ENCODE measurements at regions of chr18 and their contacts with region 1.

Region 1: GRCh38 chr18:10851824-10852319 is 297.5 kb downstream of the PIEZO2 start:
- DNase-seq: peak; percentile 75
- ATAC-seq: peak; percentile 63
- H3K4me3 ChIP-seq: no peak overlapping the region
- H3K27ac ChIP-seq: no peak overlapping the region
- H3K4me1 ChIP-seq: no peaks in the 10 kb centered on the region
- H3K27me3 ChIP-seq: peaks cover 77% of the 10 kb centered on the region
- CTCF ChIP-seq: peak; percentile 83

Region 2: DNA sequence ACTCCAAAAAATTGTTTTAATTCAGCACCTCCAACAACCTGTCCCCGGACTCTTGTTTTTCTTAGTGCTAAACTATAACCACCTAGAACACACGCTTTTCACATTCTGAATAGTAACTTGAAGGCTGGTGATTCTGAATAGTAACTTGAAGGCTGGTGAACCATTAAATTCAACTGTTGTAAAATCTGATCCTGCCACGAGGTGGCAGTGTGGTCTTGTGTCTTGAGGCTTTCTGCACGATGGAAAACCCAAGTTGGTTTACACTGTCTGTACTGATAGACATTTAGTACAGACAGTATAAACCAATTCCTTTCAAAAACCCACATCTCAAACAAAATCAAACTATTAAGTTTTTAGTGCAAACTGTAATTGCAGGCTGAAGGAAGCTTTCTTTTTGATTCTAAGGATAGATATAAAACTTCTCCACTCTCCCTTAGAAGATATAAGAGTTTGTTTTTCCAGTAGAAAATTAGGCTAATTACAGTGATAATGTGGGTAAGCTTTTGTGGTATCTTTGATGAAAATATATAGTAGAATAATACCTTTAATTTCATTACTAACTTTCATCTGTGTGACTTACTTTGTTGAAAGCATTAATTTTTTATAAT is 880.5 kb before region 1 on chr18:
- CTCF ChIA-PET with region 1: no interaction called
- POLR2A ChIA-PET with region 1: no interaction called
- intact Hi-C with region 1: loop called (anchors 10 kb)
- DNase-seq: peak; percentile 93
- ATAC-seq: peak; percentile 84
- H3K4me3 ChIP-seq: no peak overlapping the region
- H3K27ac ChIP-seq: no peak overlapping the region
- H3K4me1 ChIP-seq: no peaks in the 10 kb centered on the region
- H3K27me3 ChIP-seq: no peaks in the 10 kb centered on the region
- CTCF ChIP-seq: peak; percentile 93

Region 3: DNA sequence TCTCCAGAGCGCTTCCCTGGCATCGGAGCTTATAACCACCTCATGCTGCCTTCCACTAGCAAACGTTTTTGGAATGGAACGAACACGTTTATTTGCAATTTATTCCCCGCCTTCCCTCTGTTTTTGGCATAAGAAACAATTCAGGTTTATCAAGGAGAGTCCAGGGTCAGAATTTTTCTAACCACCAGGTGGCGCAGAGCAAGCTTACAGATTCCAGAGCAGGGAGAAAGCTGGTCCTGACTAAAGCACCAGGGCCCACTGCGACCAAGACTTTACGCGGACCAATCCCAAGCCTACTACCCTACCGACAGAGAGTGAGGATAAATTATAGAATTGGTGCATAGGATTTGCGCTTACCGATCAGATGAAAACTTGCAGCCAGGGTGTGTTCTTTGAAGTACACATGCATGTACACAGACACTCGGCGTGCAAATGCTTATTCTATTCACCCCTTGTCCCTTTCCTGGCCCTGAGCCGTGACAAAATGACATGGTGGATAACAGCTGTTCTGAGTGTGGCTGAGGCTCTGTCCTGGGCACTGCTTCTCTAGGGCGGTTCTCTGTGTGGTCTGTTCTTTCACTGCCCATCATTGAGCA is 291.3 kb before region 1 on chr18:
- CTCF ChIA-PET with region 1: no interaction called
- POLR2A ChIA-PET with region 1: no interaction called
- intact Hi-C with region 1: loop called (anchors 10 kb)
- DNase-seq: peak; percentile 83
- ATAC-seq: peak; percentile 76
- H3K4me3 ChIP-seq: no peak overlapping the region; the same call in 1 of the 2 replicates
- H3K27ac ChIP-seq: no peak overlapping the region
- H3K4me1 ChIP-seq: peaks cover 11% of the 10 kb centered on the region
- H3K27me3 ChIP-seq: no peaks in the 10 kb centered on the region
- CTCF ChIP-seq: peak; percentile 84

Region 4: DNA sequence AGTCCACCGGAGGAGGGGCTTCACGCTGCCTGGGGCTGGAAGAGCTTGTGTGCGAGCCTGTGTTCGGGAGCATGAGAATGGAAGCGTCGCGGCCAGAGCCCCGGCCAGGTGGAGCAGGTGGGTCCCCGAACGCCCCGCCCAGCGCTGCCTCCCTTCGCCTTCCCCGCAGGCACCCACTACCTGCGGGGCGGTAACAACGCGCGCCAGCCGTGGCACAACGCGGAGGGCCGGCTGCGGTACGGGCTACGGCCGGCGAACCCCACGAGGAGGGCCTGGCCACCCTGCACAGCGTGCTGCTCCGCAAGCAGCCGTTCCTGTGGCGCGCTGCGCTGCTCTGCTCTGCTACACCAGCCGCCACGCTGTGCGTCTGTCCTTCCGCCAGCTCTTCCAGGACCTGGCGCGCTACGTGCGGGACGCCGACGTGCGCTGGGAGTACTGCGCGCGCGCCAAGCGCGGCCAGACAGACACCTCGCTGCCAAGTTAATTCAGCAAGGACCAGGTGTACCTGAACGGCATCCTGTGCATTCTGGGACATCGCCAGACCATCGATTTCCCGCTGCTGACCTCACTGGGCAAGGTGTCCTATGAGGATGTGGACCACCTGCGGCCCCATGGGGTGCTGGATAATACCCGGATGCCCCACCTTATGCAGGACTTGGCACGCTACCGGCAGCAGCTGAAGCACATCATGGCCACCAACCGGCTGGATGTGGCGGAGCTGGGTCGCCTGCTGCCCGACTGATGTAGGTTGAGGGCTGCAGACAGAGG is 125.5 kb before region 1 on chr18:
- CTCF ChIA-PET with region 1: no interaction called
- POLR2A ChIA-PET with region 1: no interaction called
- intact Hi-C with region 1: no loop called
- DNase-seq: no peak
- ATAC-seq: no peak
- H3K4me3 ChIP-seq: no peak overlapping the region
- H3K27ac ChIP-seq: no peak overlapping the region
- H3K4me1 ChIP-seq: no peaks in the 10 kb centered on the region
- H3K27me3 ChIP-seq: peaks cover 63% of the 10 kb centered on the region
- CTCF ChIP-seq: no peak

Region 5: GRCh38 chr18:10804126-10804525 is 47.7 kb before region 1 on chr18:
- CTCF ChIA-PET with region 1: no interaction called
- POLR2A ChIA-PET with region 1: no interaction called
- intact Hi-C with region 1: no loop called
- DNase-seq: no peak
- ATAC-seq: no peak
- H3K4me3 ChIP-seq: no peak overlapping the region
- H3K27ac ChIP-seq: no peak overlapping the region
- H3K4me1 ChIP-seq: no peaks in the 10 kb centered on the region
- H3K27me3 ChIP-seq: peaks cover 87% of the 10 kb centered on the region
- CTCF ChIP-seq: no peak

Region 6: GRCh38 chr18:11040823-11041656 is 189.2 kb after region 1 on chr18:
- CTCF ChIA-PET with region 1: interaction called, 3 read pairs
- POLR2A ChIA-PET with region 1: no interaction called
- intact Hi-C with region 1: loop called (anchors 1 kb)
- DNase-seq: peak; percentile 65
- ATAC-seq: peak; percentile 74
- H3K4me3 ChIP-seq: no peak overlapping the region
- H3K27ac ChIP-seq: no peak overlapping the region
- H3K4me1 ChIP-seq: no peaks in the 10 kb centered on the region
- H3K27me3 ChIP-seq: peaks cover 53% of the 10 kb centered on the region
- CTCF ChIP-seq: peak; percentile 80

Region 7: GRCh38 chr18:11154368-11154989 is 302.6 kb after region 1 on chr18:
- CTCF ChIA-PET with region 1: interaction called, 8 read pairs
- POLR2A ChIA-PET with region 1: no interaction called
- intact Hi-C with region 1: loop called (anchors 1 kb)
- DNase-seq: peak; percentile 54
- ATAC-seq: 0 out of 2 replicates have a peak, but pooled peaks have one; percentile 20
- H3K4me3 ChIP-seq: no peak overlapping the region
- H3K27ac ChIP-seq: no peak overlapping the region
- H3K4me1 ChIP-seq: no peaks in the 10 kb centered on the region
- H3K27me3 ChIP-seq: peaks cover 87% of the 10 kb centered on the region
- CTCF ChIP-seq: peak; percentile 72

Region 8: GRCh38 chr18:11553098-11553940 is 701.4 kb after region 1 on chr18:
- CTCF ChIA-PET with region 1: no interaction called
- POLR2A ChIA-PET with region 1: no interaction called
- intact Hi-C with region 1: loop called (anchors 1 kb)
- DNase-seq: peak; percentile 78
- ATAC-seq: peak; percentile 89
- H3K4me3 ChIP-seq: no peak overlapping the region
- H3K27ac ChIP-seq: no peak overlapping the region
- H3K4me1 ChIP-seq: no peaks in the 10 kb centered on the region
- H3K27me3 ChIP-seq: peaks cover 61% of the 10 kb centered on the region
- CTCF ChIP-seq: peak; percentile 92